Activated T-helper 2 cell treated with anti-CD3 and anti-CD28 coated beads, Interferon-gamma antibody, Interleukin-2, Interleukin-4, amounts not matched to agents 10 μg/mL and 5 μg/mL and 100 μg/mL, durations not matched to agents 14 hours and 24 hours and 36 hours (primary cell): ENCODE measurements at regions of chr4 and their contacts with region 1.

Region 1: DNA sequence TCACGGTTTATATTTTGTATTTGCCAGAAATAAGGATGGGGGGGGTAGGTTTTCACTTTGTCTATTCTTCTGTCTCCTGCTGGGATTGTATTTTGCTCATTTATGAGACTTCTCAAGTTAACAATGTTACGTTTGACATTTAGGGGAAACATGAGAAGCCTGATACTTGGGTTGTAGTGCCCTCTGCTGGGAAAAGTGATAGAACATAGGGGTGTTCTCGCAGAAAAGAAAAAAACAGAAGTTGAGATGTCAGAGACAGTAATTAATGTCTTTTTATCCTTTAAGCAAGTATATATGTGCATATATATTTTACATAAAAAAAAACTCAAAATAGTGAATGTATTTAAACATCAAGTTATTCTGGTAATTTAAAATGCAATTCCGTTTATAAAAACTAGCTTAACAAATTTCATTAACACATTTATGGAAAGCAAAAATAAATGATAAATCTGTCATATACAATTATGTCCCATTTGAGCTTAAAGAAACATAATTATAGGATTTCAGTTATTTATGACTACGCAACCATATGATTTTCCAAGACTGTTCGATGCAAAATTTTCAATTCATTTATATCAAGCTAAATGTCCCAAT is 46.0 kb upstream of the TMPRSS11F start:
- DNase-seq: peak; percentile 18
- H3K4me3 Mint-ChIP-seq: no peak overlapping the region
- H3K27ac Mint-ChIP-seq: no peak overlapping the region
- H3K4me1 Mint-ChIP-seq: peaks cover 6% of the 10 kb centered on the region
- H3K27me3 Mint-ChIP-seq: peaks cover 4% of the 10 kb centered on the region

Region 2: GRCh38 chr4:67779631-67780030 is 396.0 kb before region 1 on chr4:
- intact Hi-C with region 1: no loop called
- DNase-seq: no peak
- H3K4me3 Mint-ChIP-seq: no peak overlapping the region
- H3K27ac Mint-ChIP-seq: no peak overlapping the region
- H3K4me1 Mint-ChIP-seq: peaks cover 11% of the 10 kb centered on the region
- H3K27me3 Mint-ChIP-seq: no peaks in the 10 kb centered on the region

Region 3: DNA sequence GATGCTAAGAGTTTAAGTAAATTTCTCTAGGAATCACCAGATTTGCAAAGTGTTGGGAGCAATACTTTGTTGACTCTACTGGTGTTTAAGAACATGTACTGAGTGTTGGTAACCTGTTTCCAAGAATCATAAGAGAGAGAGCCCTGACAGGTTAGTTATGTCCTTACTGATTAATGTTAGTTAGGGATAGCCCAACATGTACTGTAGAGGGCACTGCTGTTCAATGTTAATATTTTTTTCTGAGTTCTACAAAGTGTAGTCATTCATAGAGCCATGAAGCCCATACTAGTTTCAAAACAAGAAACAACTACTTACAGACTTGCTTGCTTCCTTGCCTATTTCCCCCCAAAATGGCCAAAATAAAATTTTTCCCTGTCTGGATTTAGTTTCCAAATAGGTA is 303.8 kb before region 1 on chr4:
- intact Hi-C with region 1: loop called (anchors 5 kb)
- DNase-seq: no peak
- H3K4me3 Mint-ChIP-seq: no peak overlapping the region
- H3K27ac Mint-ChIP-seq: no peak overlapping the region
- H3K4me1 Mint-ChIP-seq: no peaks in the 10 kb centered on the region
- H3K27me3 Mint-ChIP-seq: peaks cover 2% of the 10 kb centered on the region

Region 4: GRCh38 chr4:67988991-67989390 is 186.7 kb before region 1 on chr4:
- intact Hi-C with region 1: loop called (anchors 1 kb)
- DNase-seq: no peak
- H3K4me3 Mint-ChIP-seq: no peak overlapping the region
- H3K27ac Mint-ChIP-seq: no peak overlapping the region
- H3K4me1 Mint-ChIP-seq: peaks cover 4% of the 10 kb centered on the region
- H3K27me3 Mint-ChIP-seq: peaks cover 5% of the 10 kb centered on the region